Endothelial cell of umbilical vein (primary cell): ENCODE measurements at regions of chr13 and their contacts with region 1.

Region 1: GRCh38 chr13:98542568-98543377 is 34.1 kb downstream of the STK24 start:
- DNase-seq: no peak
- H3K4me3 ChIP-seq: no peak overlapping the region
- H3K27ac ChIP-seq: no peak overlapping the region
- H3K4me1 ChIP-seq: peaks cover 15% of the 10 kb centered on the region
- H3K27me3 ChIP-seq: no peaks in the 10 kb centered on the region
- CTCF ChIP-seq: no peak
- POLR2A ChIP-seq: no peak

Region 2: DNA sequence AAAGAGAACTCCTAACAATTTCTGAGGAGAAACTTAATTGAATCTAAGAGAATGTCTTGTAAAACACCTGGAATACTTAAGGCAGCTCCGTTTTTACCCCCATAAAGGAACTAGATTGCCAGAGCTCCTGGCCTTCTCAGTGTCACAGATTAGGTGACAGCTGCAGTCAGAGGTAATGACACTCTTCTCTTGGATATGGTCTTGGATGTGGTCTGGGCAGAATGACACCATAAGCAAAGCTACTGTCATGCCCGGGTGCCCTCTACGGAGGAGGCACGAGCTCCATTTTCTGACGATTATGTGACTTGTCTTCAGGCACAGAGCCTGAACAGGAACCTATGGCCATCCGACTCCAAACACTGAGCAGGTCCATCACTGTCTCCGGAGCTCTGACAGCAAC is 12.6 kb before region 1 on chr13:
- CTCF ChIA-PET with region 1: interaction called, 13 read pairs
- POLR2A ChIA-PET with region 1: interaction called, 8 read pairs
- dilution Hi-C with region 1: no loop called
- intact Hi-C with region 1: no loop called
- DNase-seq: no peak
- H3K4me3 ChIP-seq: no peak overlapping the region
- H3K27ac ChIP-seq: no peak overlapping the region
- H3K4me1 ChIP-seq: no peaks in the 10 kb centered on the region
- H3K27me3 ChIP-seq: no peaks in the 10 kb centered on the region
- CTCF ChIP-seq: no peak
- POLR2A ChIP-seq: no peak

Region 3: DNA sequence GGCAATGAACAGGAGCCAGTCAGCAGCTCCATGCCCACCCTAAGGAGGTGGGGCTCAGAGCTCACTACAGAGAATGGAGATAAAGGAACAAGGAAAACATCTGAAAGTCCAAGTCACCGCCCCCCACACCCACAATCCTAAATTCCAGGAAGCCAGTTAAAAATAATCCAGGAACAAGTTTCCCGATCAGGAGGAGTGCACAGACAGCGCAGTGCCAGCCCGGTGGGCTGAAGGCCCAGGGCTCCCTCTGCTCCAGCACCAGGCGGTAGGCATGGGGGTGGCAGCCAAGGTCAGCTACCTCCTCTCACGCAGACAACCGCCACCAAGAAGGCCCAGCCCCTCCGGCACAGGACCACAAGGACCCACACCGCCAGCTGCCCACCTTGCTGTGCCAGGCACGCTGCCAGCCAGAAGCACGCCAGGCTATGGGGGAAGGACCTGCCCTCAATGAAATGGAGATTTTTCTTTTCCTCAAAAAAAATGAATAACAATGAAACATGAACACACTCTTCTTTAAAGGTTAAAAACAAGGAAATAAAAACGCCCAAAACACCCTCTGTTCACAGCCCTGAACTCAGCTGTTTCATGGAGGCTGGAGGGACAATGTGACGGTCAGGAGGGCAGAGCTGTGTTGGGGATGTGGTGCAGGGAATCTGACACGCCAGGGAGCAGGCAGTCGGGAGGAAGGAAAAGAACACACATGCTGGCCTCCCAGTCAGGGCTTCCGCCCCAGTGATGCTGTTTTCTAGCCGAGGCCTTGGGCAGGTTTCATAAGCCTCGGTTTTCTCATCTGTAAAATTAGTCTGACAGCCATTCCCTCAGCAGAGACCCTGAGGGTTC is 23.2 kb after region 1 on chr13:
- CTCF ChIA-PET with region 1: no interaction called
- POLR2A ChIA-PET with region 1: no interaction called
- dilution Hi-C with region 1: no loop called
- intact Hi-C with region 1: loop called (anchors 2 kb)
- DNase-seq: peak; percentile 80
- H3K4me3 ChIP-seq: peak overlapping the region in 1 of 3 experiments; percentile 16
- H3K27ac ChIP-seq: peak overlapping the region; percentile 80
- H3K4me1 ChIP-seq: peaks cover 33% of the 10 kb centered on the region
- H3K27me3 ChIP-seq: no peaks in the 10 kb centered on the region
- CTCF ChIP-seq: no peak
- POLR2A ChIP-seq: no peak